Pancreas (tissue), 10 donors: ENCODE measurements at regions of chr15 and their contacts with region 1.

Region 1: GRCh38 chr15:63135804-63136203 is 14.1 kb downstream of the LACTB start:
- DNase-seq: no peak
- ATAC-seq: peak in 3 of 4 donors; percentile 18 to 65 (median 62)
- H3K4me3 ChIP-seq: no peak overlapping the region
- H3K27ac ChIP-seq: peak overlapping the region in 2 of 4 donors; percentile 34 to 40
- H3K4me1 ChIP-seq: no peaks in the 10 kb centered on the region
- H3K27me3 ChIP-seq: no peaks in the 10 kb centered on the region
- CTCF ChIP-seq: no peak

Region 2: GRCh38 chr15:63256433-63257274 is 120.8 kb after region 1 on chr15:
- intact Hi-C with region 1: loop called in 1 of 3 experiments (anchors 10 kb)
- DNase-seq: no peak
- ATAC-seq: peak in 1 of 4 donors; percentile 46
- H3K4me3 ChIP-seq: no peak overlapping the region
- H3K27ac ChIP-seq: no peak overlapping the region
- H3K4me1 ChIP-seq: no peaks in the 10 kb centered on the region
- H3K27me3 ChIP-seq: no peaks in the 10 kb centered on the region
- CTCF ChIP-seq: no peak